ENCODE measurements at regions of chr6 and their contacts with region 1.

Region 1: GRCh38 chr6:157090736-157091135 is 232.6 kb downstream of the TMEM242 start:
- DNase-seq: no peak
- H3K4me3 ChIP-seq: no peak overlapping the region
- H3K27ac ChIP-seq: no peak overlapping the region
- H3K4me1 ChIP-seq: peaks cover 10% of the 10 kb centered on the region
- CTCF ChIP-seq: no peak

Region 2: DNA sequence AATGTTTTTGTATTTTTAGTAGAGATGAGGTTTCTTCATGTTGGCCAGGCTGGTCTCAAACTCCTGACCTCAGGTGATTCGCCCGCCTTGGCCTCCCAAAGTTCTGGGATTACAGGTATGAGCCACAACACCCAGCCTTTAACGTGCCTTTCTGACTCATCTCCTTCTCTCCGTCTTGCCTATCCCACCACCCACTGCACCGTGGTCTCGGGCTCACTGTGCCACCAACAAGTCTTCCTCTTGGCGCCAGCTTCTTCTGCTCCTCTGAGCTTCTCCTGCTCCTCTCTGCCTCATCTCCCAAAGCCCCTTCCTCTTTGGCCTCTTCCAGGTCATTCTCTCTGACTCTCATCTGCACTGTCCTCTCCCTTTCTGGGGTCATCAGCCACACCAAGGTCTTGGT is 191.5 kb after region 1 on chr6:
- CTCF ChIA-PET with region 1: no interaction called
- POLR2A ChIA-PET with region 1: interaction called, 10 read pairs
- intact Hi-C with region 1: no loop called
- DNase-seq: no peak
- H3K4me3 ChIP-seq: no peak overlapping the region
- H3K27ac ChIP-seq: no peak overlapping the region
- H3K4me1 ChIP-seq: no peaks in the 10 kb centered on the region
- CTCF ChIP-seq: no peak

Measured in OCI-LY7 (cell line).